ENCODE measurements at regions of chr6 and their contacts with region 1.

Region 1: GRCh38 chr6:160137989-160138835 is 16.6 kb downstream of the SLC22A1 start:
- DNase-seq: peak; percentile 69
- H3K4me3 ChIP-seq: no peak overlapping the region
- H3K27ac ChIP-seq: no peak overlapping the region
- H3K4me1 ChIP-seq: no peaks in the 10 kb centered on the region
- H3K27me3 ChIP-seq: no peaks in the 10 kb centered on the region
- CTCF ChIP-seq: peak; percentile 69

Region 2: GRCh38 chr6:160300076-160300695 is 162.0 kb after region 1 on chr6:
- intact Hi-C with region 1: loop called (anchors 2 kb)
- DNase-seq: peak; percentile 92
- H3K4me3 ChIP-seq: no peak overlapping the region
- H3K27ac ChIP-seq: peak overlapping the region; percentile 80
- H3K4me1 ChIP-seq: no peaks in the 10 kb centered on the region
- H3K27me3 ChIP-seq: no peaks in the 10 kb centered on the region
- CTCF ChIP-seq: no peak

Measured in colonic mucosa (tissue), 4 donors.